Prostate gland (tissue), 2 donors: ENCODE measurements at regions of chr1 and their contacts with region 1.

Region 1: DNA sequence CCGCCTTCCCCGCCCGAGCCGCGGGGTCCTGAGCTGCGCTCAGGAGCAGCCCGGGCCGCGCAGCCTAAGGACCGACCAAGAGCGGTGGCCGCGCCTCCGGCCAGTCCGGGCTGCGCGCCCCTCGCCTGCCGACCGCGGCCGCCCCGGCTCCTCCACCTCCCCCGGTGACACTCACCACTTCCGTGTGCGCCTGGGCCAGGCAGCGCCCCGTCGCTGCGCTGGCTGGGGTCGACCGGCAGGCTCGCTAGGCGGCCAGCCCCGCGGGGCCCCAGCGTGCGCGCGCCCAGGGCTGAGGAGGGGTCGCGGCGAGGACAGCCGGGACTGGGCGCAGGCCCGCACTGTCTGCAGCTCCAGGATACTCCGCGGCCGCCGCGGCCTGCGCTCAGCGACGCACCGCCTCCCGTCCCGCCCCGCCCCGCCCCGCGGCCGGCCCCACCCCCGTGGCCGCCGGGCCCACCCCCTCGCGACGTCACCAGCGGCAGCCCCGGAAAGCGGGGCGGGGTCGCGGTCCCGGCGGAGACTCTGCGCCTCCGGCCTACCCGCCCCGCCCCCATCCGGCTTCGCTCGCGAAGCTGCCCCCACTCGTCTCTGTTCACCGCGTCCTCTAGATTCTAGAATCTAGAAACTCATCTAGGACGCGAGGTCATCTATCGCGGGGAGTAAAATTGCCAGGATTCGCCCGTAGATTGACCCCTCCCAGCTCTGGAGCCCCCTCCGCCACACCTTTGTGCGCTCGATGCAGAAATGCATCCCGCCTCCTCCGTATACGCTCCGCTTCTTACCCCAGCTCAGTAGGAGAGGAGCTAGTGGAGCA is at the start of gene JAK1:
- DNase-seq: peak; percentile 86
- H3K4me3 ChIP-seq: peak within 1 kb of the TSS; percentile 98 to 99
- H3K27ac ChIP-seq: peak within 1 kb of the TSS; percentile 87 to 93
- H3K4me1 ChIP-seq: no peaks in the 10 kb centered on the region
- H3K27me3 ChIP-seq: no peaks in the 10 kb centered on the region
- CTCF ChIP-seq: peak in 1 of 4 experiments; percentile 36
- POLR2A ChIP-seq: peak; percentile 94
- total RNA-seq, gene JAK1: 66.3 to 115 TPM

Region 2: GRCh38 chr1:64898107-64898845 is 68.1 kb before region 1 on chr1:
- intact Hi-C with region 1: loop called (anchors 10 kb)
- DNase-seq: peak; percentile 78
- H3K4me3 ChIP-seq: no peak overlapping the region
- H3K27ac ChIP-seq: peak overlapping the region; percentile 24 to 68
- H3K4me1 ChIP-seq: no peaks in the 10 kb centered on the region
- H3K27me3 ChIP-seq: no peaks in the 10 kb centered on the region
- CTCF ChIP-seq: no peak
- POLR2A ChIP-seq: no peak

Region 3: GRCh38 chr1:65002508-65003315 is 36.3 kb after region 1 on chr1:
- intact Hi-C with region 1: loop called (anchors 5 kb)
- DNase-seq: peak; percentile 81
- H3K4me3 ChIP-seq: peak overlapping the region; percentile 48 to 57
- H3K27ac ChIP-seq: peak overlapping the region; percentile 86 to 90
- H3K4me1 ChIP-seq: peaks cover 3% of the 10 kb centered on the region
- H3K27me3 ChIP-seq: no peaks in the 10 kb centered on the region
- CTCF ChIP-seq: no peak
- POLR2A ChIP-seq: peak; percentile 34

Region 4: GRCh38 chr1:65059930-65060538 is 93.7 kb after region 1 on chr1:
- intact Hi-C with region 1: loop called (anchors 5 kb)
- DNase-seq: no peak
- H3K4me3 ChIP-seq: no peak overlapping the region
- H3K27ac ChIP-seq: no peak overlapping the region
- H3K4me1 ChIP-seq: peaks cover 6% of the 10 kb centered on the region
- H3K27me3 ChIP-seq: no peaks in the 10 kb centered on the region
- CTCF ChIP-seq: peak; percentile 25 to 74 (median 52)
- POLR2A ChIP-seq: no peak